ENCODE measurements at regions of chr12 and their contacts with region 1.

Region 1: GRCh38 chr12:57520053-57520871 is at the start of gene DDIT3:
- DNase-seq: peak; percentile 100
- H3K4me3 Mint-ChIP-seq: peak within 1 kb of the TSS; percentile 94
- H3K27ac Mint-ChIP-seq: peak within 1 kb of the TSS; percentile 100
- H3K4me1 Mint-ChIP-seq: peaks cover 55% of the 10 kb centered on the region
- H3K27me3 Mint-ChIP-seq: no peaks in the 10 kb centered on the region
- total RNA-seq, gene DDIT3: 24.1 to 25.2 TPM

Region 2: GRCh38 chr12:57238854-57239554 is 281.3 kb before region 1 on chr12:
- CTCF ChIA-PET with region 1: no interaction called
- POLR2A ChIA-PET with region 1: no interaction called
- intact Hi-C with region 1: loop called (anchors 5 kb)
- DNase-seq: peak; percentile 93
- H3K4me3 Mint-ChIP-seq: peak overlapping the region; percentile 82
- H3K27ac Mint-ChIP-seq: no peak overlapping the region
- H3K4me1 Mint-ChIP-seq: peaks cover 60% of the 10 kb centered on the region
- H3K27me3 Mint-ChIP-seq: peaks cover 39% of the 10 kb centered on the region

Region 3: DNA sequence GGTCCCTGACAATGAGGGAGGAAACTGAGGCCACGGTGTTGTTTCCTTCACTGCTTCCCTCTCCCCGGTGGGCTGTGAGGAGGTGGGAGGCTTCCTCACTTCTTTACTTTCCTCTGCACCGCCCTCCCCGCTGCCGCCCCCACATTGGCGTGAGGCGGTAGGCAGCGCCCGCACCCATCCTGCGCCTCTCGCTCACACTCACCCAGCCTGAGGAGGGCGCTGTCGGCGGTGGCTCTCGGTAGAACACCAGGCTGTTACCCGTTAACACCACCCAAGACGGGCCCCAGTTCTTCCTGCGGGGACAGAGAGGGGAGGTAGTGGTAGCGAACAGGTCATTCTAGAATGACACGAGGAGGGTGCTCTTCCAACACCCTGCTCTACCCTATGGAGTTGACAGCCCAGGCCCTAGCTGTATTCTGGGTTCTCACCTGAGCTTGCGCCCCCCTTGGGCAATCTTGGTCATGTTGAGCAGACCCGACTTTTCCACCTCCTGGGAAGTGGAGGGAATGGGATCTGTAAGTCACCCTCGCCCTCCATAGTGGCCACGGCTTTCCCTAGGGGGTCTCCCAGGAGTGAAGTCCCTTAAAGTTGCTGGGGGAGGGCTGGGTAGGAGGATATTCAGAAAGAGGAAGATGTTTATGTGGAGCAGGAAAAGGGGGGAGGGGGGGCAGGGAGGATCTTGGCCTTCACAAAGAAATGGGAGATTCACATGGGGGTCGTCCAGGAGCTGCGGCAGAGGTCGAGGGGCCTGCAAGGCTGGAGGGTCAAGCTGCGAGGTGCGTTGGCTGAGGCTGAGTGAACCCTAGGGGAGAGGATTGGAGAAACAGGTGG is 43.9 kb before region 1 on chr12:
- CTCF ChIA-PET with region 1: interaction called, 4 read pairs
- POLR2A ChIA-PET with region 1: interaction called, 4 read pairs
- intact Hi-C with region 1: loop called (anchors 1 kb)
- DNase-seq: peak; percentile 94
- H3K4me3 Mint-ChIP-seq: peak overlapping the region; percentile 87
- H3K27ac Mint-ChIP-seq: peak overlapping the region; percentile 99
- H3K4me1 Mint-ChIP-seq: peaks cover 60% of the 10 kb centered on the region
- H3K27me3 Mint-ChIP-seq: no peaks in the 10 kb centered on the region

Region 4: GRCh38 chr12:57546438-57547383 is 26.4 kb after region 1 on chr12 and contains the start of gene DCTN2:
- CTCF ChIA-PET with region 1: interaction called, 8 read pairs
- POLR2A ChIA-PET with region 1: interaction called, 8 read pairs
- intact Hi-C with region 1: loop called (anchors 1 kb)
- DNase-seq: peak; percentile 98
- H3K4me3 Mint-ChIP-seq: peak within 1 kb of the TSS; percentile 97
- H3K27ac Mint-ChIP-seq: peak within 1 kb of the TSS; percentile 87
- H3K4me1 Mint-ChIP-seq: peaks cover 49% of the 10 kb centered on the region
- H3K27me3 Mint-ChIP-seq: peaks cover 5% of the 10 kb centered on the region
- total RNA-seq, gene DCTN2: 81.0 to 85.2 TPM

Region 5: GRCh38 chr12:57693659-57694458 is 173.6 kb after region 1 on chr12 and contains the start of gene OS9:
- CTCF ChIA-PET with region 1: interaction called, 4 read pairs
- POLR2A ChIA-PET with region 1: no interaction called
- intact Hi-C with region 1: loop called (anchors 1 kb)
- DNase-seq: peak; percentile 97
- H3K4me3 Mint-ChIP-seq: no peak within 1 kb of the TSS
- H3K27ac Mint-ChIP-seq: no peak within 1 kb of the TSS
- H3K4me1 Mint-ChIP-seq: no peaks in the 10 kb centered on the region
- H3K27me3 Mint-ChIP-seq: peaks cover under 1% of the 10 kb centered on the region
- total RNA-seq, gene OS9: 73.4 to 74.8 TPM